CD8-positive, alpha-beta T cell (primary cell): ENCODE measurements at regions of chr12 and their contacts with region 1.

Region 1: DNA sequence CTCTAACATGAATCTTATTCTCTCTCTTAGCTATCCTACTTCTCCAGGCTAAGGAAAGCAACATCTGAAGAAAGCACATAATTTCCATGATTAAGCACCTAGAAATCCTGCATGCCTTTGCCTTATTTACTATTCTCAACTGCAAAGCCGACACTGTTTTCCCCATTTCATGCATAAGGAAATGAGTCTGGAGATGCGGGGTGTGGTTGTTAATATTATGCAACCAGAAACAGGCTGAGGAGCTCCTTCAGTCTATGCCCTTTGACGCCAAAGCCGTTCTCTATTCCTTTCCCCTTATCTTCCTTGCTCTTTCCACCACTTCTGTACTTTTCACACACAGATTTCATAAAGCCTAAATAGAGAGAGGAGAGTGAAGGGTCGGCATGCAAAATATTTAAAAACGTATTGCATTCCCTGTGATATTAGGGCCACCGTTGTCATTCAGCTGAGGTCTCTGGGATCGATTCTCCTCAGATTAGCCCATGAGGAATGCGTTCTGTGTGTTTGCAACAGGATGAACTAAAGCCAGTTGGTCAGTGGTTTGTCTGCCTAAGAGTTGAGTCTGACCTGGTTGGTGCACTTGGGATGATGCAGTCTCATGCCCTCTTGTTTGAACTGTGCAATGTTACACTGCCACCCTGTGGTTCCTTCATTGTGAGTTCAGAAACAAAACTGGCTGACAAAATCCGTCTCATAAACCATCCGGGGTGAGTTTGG is 53.1 kb upstream of the PLEKHG7 start:
- DNase-seq: peak; percentile 29 to 85 (median 63)
- ATAC-seq: peak; percentile 90
- H3K4me3 ChIP-seq: no peak overlapping the region
- H3K4me3 Mint-ChIP-seq: no peak overlapping the region
- H3K27ac ChIP-seq: no peak overlapping the region
- H3K27ac Mint-ChIP-seq: no peak overlapping the region
- H3K4me1 ChIP-seq: no peaks in the 10 kb centered on the region
- H3K4me1 Mint-ChIP-seq: peaks cover 6% of the 10 kb centered on the region
- H3K27me3 ChIP-seq: no peaks in the 10 kb centered on the region
- H3K27me3 Mint-ChIP-seq: no peaks in the 10 kb centered on the region
- CTCF ChIP-seq: peak; percentile 68

Region 2: GRCh38 chr12:91361864-91362263 is 1287.8 kb before region 1 on chr12:
- CTCF ChIA-PET with region 1: interaction called, 15 read pairs
- POLR2A ChIA-PET with region 1: no interaction called
- intact Hi-C with region 1: loop called (anchors 1 to 2 kb)
- DNase-seq: peak in 2 of 9 experiments; percentile 50 to 61
- ATAC-seq: peak; percentile 57
- H3K4me3 ChIP-seq: no peak overlapping the region
- H3K4me3 Mint-ChIP-seq: no peak overlapping the region
- H3K27ac ChIP-seq: no peak overlapping the region
- H3K27ac Mint-ChIP-seq: no peak overlapping the region
- H3K4me1 ChIP-seq: no peaks in the 10 kb centered on the region
- H3K4me1 Mint-ChIP-seq: no peaks in the 10 kb centered on the region
- H3K27me3 ChIP-seq: no peaks in the 10 kb centered on the region
- H3K27me3 Mint-ChIP-seq: peaks cover 9% of the 10 kb centered on the region
- CTCF ChIP-seq: peak; percentile 76

Region 3: GRCh38 chr12:91388552-91388965 is 1261.1 kb before region 1 on chr12:
- CTCF ChIA-PET with region 1: interaction called, 24 read pairs
- POLR2A ChIA-PET with region 1: no interaction called
- intact Hi-C with region 1: no loop called
- DNase-seq: no peak
- ATAC-seq: no peak
- H3K4me3 ChIP-seq: no peak overlapping the region
- H3K4me3 Mint-ChIP-seq: no peak overlapping the region
- H3K27ac ChIP-seq: no peak overlapping the region
- H3K27ac Mint-ChIP-seq: no peak overlapping the region
- H3K4me1 ChIP-seq: no peaks in the 10 kb centered on the region
- H3K4me1 Mint-ChIP-seq: no peaks in the 10 kb centered on the region
- H3K27me3 ChIP-seq: no peaks in the 10 kb centered on the region
- H3K27me3 Mint-ChIP-seq: no peaks in the 10 kb centered on the region
- CTCF ChIP-seq: no peak

Region 4: GRCh38 chr12:91991399-91992187 is 658.1 kb before region 1 on chr12:
- CTCF ChIA-PET with region 1: no interaction called
- POLR2A ChIA-PET with region 1: no interaction called
- intact Hi-C with region 1: loop called in 1 of 2 experiments (anchors 5 kb)
- DNase-seq: peak in 2 of 9 experiments; percentile 61 to 77
- ATAC-seq: peak; percentile 71
- H3K4me3 ChIP-seq: no peak overlapping the region
- H3K4me3 Mint-ChIP-seq: no peak overlapping the region
- H3K27ac ChIP-seq: no peak overlapping the region
- H3K27ac Mint-ChIP-seq: peak overlapping the region; percentile 66
- H3K4me1 ChIP-seq: peaks cover 25% of the 10 kb centered on the region
- H3K4me1 Mint-ChIP-seq: peaks cover 65% of the 10 kb centered on the region
- H3K27me3 ChIP-seq: no peaks in the 10 kb centered on the region
- H3K27me3 Mint-ChIP-seq: no peaks in the 10 kb centered on the region
- CTCF ChIP-seq: peak; percentile 28

Region 5: DNA sequence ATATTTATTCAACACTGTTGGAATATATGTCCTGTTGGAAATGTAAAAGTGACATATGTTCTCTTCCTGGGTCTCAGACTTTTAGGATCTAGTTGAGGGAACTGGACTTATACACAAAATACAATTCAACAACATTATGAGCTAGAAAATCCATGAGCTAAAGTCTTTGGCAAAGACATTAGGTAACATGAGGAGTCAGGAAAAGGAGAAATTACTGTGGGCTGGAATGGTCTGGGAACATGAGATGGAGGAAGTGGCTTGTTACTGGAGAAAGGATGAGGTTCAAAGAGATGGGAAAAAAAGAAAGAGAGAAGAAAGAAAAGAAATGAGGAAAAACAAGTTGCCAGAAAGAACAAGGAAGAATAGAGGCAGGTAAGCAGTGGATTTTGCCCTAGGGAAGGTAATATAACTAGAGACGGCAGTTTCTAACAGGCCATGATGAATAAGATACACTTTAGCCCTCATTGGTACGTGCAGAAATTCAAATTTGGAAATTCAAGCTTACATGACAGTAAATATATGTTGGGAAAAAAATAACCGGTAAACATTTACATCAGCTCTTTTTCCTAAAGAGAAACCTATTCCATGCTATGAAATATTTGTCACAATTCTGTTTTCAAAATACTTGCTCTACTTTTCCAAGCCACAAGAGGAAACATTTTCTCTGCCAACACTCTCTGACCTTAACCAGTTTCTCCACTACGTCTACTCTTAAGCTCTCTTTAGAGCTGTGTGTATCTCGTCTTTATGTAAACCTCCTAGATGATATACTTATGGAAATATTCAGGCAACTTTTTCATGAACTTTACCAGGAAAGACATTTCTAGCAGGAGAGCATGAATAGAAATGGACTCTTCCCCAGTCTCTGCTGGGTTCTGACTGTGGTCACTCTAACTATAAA is 235.2 kb before region 1 on chr12:
- CTCF ChIA-PET with region 1: no interaction called
- POLR2A ChIA-PET with region 1: no interaction called
- intact Hi-C with region 1: loop called in 1 of 2 experiments (anchors 10 kb)
- DNase-seq: no peak
- ATAC-seq: no peak
- H3K4me3 ChIP-seq: no peak overlapping the region
- H3K4me3 Mint-ChIP-seq: no peak overlapping the region
- H3K27ac ChIP-seq: no peak overlapping the region
- H3K27ac Mint-ChIP-seq: no peak overlapping the region
- H3K4me1 ChIP-seq: no peaks in the 10 kb centered on the region
- H3K4me1 Mint-ChIP-seq: peaks cover 11% of the 10 kb centered on the region
- H3K27me3 ChIP-seq: no peaks in the 10 kb centered on the region
- H3K27me3 Mint-ChIP-seq: no peaks in the 10 kb centered on the region
- CTCF ChIP-seq: no peak

Region 6: DNA sequence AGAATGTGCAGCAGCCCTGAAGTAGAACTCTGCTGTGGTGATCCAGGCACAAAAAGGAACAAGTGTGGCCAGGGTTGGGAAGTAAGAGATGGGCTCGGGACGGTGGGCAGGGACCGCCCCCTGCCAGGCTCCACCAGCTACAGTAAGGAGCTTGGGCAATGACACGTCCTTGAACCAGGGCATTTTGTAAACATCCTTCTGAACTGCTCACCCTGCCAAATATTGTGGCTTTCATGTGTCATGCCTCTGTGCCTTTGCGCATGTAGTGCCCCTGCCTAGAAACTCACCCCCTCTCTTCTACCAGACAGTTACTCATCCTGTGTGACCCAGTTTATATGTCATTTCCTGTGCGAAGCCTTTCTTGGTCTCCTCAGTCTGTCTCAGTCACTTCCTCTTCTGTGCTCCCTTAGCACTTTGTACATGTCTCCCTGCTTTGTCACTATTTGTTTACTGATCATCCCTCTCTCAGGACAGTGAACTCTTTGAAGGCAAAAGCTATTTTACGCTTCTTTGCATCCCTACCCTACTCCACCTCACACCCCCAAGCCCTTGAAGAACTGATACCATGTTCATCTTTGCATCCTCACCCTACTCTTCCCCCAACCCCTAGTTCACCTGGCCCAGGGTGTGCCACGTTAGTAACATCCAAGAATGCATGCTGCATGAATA is 55.8 kb before region 1 on chr12:
- CTCF ChIA-PET with region 1: interaction called, 4 read pairs
- POLR2A ChIA-PET with region 1: no interaction called
- intact Hi-C with region 1: loop called in 1 of 2 experiments (anchors 1 kb)
- DNase-seq: peak; percentile 66 to 98 (median 77)
- ATAC-seq: peak; percentile 85
- H3K4me3 ChIP-seq: no peak overlapping the region
- H3K4me3 Mint-ChIP-seq: peak overlapping the region; percentile 44
- H3K27ac ChIP-seq: peak overlapping the region; percentile 73 to 99
- H3K27ac Mint-ChIP-seq: peak overlapping the region; percentile 98
- H3K4me1 ChIP-seq: peaks cover 26% of the 10 kb centered on the region
- H3K4me1 Mint-ChIP-seq: peaks cover 39% of the 10 kb centered on the region
- H3K27me3 ChIP-seq: no peaks in the 10 kb centered on the region
- H3K27me3 Mint-ChIP-seq: no peaks in the 10 kb centered on the region
- CTCF ChIP-seq: no peak